ENCODE measurements at regions of chr2 and their contacts with region 1.

Region 1: DNA sequence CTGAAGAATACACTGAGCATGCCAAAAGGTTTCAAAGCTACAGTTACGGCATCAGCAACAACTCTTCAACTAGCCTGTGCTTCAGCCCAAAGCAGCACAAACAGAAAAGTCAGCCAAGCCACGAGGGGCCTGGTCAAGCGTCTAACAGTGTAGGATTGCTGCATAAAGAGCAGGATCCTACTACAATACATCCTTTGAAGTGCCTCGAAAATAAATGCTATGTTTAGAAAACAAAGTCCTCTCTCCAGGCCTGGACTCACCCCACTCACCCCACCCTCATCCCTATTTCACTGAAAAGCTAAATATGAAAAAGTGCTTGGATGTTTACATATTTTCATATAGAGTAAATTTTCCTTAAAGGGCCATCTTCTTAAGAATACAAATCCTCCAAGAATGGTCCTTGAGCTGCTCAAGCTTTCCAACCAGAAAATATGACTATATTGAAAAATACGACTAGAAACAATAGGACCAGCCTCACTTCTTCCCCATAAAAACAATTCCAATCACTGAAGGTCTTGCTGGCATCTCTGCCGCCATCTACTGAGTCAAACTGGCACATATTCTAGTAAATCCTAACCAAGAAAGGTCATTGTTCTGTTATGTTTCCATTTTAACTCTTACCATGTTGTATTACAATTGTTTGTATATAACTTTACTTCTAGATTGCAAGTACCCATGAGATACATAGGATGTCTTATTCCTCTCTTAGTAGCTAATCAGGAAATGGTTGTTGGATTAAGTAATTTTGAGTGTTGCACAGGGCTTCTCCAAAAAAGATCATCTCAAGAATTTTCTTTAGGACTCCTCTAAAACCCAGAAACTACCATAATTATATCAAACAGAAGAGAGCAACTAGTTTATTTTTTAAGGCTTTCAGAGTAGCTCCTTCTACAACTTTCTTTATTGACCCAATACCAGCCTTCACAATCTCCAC is 63.6 kb downstream of the CLHC1 start:
- DNase-seq: peak; percentile 48
- CTCF ChIP-seq: peak; percentile 50

Region 2: GRCh38 chr2:54750040-54750439 is 418.4 kb before region 1 on chr2:
- in situ Hi-C with region 1: no loop called
- DNase-seq: no peak
- CTCF ChIP-seq: no peak

Region 3: DNA sequence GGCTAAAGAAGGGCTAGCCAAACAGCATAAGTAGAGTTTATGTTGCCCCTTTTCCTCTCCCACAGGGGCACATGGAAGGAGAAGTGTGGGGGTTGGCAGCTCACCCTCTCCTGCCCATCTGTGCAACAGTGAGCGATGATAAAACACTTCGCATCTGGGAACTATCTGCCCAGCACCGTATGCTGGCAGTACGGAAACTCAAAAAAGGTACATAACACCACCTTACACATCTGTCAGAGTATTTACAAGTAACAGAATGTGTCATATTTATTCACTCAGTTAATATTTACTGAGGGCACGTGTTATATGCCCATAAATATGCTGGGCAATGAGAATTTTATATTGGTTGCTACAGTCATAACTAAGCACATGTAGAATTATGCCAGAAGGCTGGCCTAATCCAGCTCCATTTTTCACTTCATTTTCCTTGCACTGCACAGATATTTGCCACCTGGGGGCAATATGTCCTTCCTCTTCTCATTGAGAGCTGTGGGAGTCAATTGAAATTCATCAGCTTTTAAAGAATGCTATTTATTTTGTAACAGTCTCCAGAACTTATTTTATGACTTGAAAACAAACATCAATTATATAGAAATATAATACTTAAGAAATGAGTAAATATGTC is 268.8 kb before region 1 on chr2:
- in situ Hi-C with region 1: loop called (anchors 25 kb)
- DNase-seq: peak; percentile 27
- CTCF ChIP-seq: peak; percentile 26

Region 4: DNA sequence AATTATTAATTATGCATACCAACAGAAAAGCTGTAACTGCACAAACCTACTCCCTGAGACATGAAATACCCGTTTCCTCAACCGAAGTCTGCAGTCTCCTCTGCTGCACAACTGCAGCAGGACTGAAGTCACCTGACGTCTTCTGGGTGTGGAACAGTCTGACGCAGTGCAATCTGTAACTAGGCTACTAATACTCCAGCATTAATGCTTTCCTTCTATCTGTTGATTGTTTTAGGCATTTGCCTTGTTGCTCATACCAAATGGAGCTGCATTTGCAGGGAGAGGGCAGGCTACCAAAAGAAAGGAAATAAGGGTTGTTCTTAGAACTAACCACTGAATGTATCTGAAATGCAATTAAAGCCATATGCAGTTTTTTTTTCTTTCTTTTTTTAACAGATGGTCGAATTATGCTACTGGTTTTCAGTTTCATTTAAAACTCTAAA is 158.3 kb before region 1 on chr2:
- in situ Hi-C with region 1: loop called (anchors 10 kb)
- DNase-seq: peak; percentile 24
- CTCF ChIP-seq: no peak

Region 5: DNA sequence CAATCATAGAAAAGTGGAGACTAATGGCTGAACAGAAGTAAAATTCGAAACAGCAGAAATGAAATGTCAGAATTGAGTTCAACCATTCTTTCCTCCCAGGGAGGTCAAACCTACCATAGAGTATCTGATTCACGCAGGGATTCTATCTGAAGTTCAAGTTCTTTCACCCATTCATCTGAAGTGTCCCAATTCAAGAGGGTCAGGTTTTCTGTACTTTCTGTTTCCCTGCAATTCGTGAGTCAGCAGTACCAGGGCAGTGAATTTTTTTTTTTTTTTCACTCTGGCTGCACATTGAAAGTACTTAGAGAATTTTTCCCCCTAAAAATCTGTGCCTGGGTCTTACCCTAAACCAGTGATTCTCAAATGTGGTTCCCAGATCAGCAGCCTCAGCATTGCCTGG is 292.1 kb after region 1 on chr2:
- in situ Hi-C with region 1: no loop called
- DNase-seq: no peak
- CTCF ChIP-seq: no peak

Measured in GM13976 (cell line).